CD8-positive, alpha-beta T cell (primary cell): ENCODE measurements at regions of chr17 and their contacts with region 1.

Region 1: DNA sequence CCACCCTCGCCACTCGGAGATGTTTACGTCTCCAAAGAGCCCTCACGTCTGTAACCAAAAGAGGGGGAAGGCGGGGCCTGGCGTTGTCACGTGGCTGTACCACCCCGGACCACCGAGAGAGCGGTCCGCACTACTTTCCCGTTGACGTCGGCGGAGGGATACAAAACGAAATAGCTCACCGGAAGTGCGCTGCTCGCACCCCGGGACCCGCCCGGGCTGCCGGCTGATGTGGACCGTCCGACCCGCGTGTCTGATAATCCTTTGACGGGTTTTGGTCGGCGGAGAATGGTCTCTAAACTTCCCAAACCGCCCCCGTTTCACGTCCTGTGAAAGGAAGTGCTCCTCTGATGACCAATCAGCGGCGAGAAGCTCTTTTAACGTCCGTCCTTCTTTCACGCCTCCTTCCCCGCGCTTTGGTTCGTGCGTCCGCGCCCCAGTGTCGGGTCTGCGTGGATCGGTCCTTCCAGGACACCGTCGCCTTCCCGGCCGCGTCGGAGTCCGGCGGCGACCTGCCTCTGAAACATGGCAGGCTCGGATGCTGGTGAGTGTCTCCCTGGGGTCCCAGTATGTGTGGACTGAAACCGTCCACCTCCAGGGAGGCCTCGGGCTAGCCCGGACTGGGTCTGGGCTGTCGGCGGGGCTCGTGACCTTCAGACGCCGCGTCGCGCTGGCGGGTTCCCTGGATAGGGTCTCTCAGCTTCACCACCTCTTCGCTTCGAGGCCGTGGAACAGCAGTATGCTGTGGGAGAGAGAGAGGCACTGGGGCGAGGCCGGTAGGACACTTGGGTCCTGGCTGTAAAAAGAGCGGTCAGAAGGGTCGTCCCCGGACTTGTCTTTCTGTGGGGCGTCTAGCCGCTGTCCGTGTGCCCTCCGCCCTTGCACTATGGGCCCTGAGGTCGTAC is at the start of gene CEP95:
- DNase-seq: peak; percentile 90 to 99 (median 96)
- ATAC-seq: peak; percentile 64
- H3K4me3 ChIP-seq: peak within 1 kb of the TSS; percentile 99 to 100
- H3K4me3 Mint-ChIP-seq: peak within 1 kb of the TSS; percentile 100
- H3K27ac ChIP-seq: peak within 1 kb of the TSS; percentile 100
- H3K27ac Mint-ChIP-seq: peak within 1 kb of the TSS; percentile 100
- H3K4me1 ChIP-seq: peaks cover 44% of the 10 kb centered on the region
- H3K4me1 Mint-ChIP-seq: peaks cover 62% of the 10 kb centered on the region
- H3K27me3 ChIP-seq: no peaks in the 10 kb centered on the region
- H3K27me3 Mint-ChIP-seq: no peaks in the 10 kb centered on the region
- CTCF ChIP-seq: no peak
- total RNA-seq, gene CEP95: 248 to 282 TPM

Region 2: DNA sequence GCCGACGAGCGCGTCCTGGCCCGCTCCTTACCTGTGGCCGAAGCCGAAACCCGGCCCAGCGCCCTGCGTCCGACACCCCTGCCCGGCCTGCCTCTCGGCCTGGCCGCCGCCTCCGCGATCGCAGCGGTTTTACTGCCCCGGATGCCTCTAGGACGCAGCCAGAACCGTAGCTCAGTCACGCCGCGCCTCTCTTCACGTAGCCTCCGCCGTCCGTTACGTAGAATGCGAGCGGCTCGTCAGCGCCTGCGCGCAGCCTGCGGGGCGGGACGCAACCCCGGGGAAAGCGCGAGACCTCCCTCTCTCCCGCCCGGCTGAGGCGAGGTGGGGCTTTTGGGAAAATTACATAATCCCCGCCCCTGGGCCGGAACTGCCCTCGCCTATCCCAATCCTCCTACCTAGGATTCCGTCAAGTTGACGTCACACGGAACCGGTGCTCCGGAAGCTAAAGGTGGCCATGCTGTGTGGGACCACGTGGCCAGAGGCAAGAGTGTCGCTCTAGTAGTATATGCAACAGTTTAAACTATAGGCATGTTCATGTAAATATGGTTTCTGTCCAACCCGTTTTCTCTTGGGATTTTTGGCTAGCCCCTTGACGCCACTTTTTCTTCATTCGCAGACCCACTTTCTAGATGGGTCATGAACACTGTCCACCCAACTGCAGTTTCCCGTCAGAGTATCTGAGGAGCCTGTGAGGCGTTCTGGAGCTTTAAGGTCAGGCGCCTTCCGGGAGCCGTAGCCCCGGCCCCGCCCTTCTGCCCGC is 733.3 kb before region 1 on chr17 and contains the start of gene CCDC47:
- CTCF ChIA-PET with region 1: no interaction called
- POLR2A ChIA-PET with region 1: interaction called, 7 read pairs
- intact Hi-C with region 1: loop called in 1 of 2 experiments (anchors 5 kb)
- DNase-seq: peak; percentile 95 to 100 (median 97)
- ATAC-seq: peak; percentile 79
- H3K4me3 ChIP-seq: peak within 1 kb of the TSS; percentile 84 to 95
- H3K4me3 Mint-ChIP-seq: peak within 1 kb of the TSS; percentile 97
- H3K27ac ChIP-seq: peak within 1 kb of the TSS; percentile 86 to 97
- H3K27ac Mint-ChIP-seq: peak within 1 kb of the TSS; percentile 98
- H3K4me1 ChIP-seq: peaks cover 41% of the 10 kb centered on the region
- H3K4me1 Mint-ChIP-seq: peaks cover 60% of the 10 kb centered on the region
- H3K27me3 ChIP-seq: no peaks in the 10 kb centered on the region
- H3K27me3 Mint-ChIP-seq: no peaks in the 10 kb centered on the region
- CTCF ChIP-seq: no peak
- total RNA-seq, gene CCDC47: 33.1 to 34.6 TPM

Region 3: DNA sequence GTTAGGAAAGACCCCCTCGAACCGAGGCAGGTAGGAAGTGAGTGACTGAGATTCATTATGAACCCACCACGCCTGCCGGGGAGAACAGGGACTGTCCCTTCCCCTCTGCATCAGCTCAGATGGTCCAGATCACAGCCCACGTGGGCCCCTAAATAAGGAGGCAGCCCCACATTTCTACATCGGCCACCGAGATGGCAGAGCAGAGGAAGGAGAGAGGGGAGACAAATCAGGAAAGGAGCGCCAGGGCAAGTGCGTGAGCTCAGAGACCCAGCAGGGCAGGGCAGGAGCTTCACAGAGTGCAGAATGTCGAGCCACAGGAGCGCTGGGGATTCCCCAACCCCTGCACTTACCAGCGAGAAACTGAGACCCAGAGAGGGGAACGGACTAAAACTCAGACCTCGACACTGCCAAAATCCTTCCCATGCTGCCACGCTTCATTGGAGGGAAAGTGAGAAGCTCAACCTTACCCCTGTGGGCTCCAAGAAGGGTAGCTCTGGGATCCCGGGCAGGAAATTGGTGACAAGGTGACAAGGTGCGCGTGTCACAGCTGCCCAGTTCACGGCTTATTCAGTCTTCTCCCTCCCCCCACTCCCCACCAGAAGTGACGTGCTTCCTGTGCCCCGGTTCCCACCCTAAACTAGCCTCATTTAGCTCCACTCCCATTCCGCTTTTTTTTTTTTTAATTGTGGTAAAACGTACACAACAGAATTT is 486.6 kb before region 1 on chr17 and contains the start of gene ICAM2:
- CTCF ChIA-PET with region 1: no interaction called
- POLR2A ChIA-PET with region 1: interaction called, 9 read pairs
- intact Hi-C with region 1: loop called in 1 of 2 experiments (anchors 5 kb)
- DNase-seq: peak; percentile 83 to 99 (median 90)
- ATAC-seq: peak; percentile 73
- H3K4me3 ChIP-seq: peak within 1 kb of the TSS; percentile 78 to 87
- H3K4me3 Mint-ChIP-seq: peak within 1 kb of the TSS; percentile 99
- H3K27ac ChIP-seq: peak within 1 kb of the TSS; percentile 95 to 99
- H3K27ac Mint-ChIP-seq: peak within 1 kb of the TSS; percentile 100
- H3K4me1 ChIP-seq: peaks cover 72% of the 10 kb centered on the region
- H3K4me1 Mint-ChIP-seq: peaks cover 79% of the 10 kb centered on the region
- H3K27me3 ChIP-seq: no peaks in the 10 kb centered on the region
- H3K27me3 Mint-ChIP-seq: no peaks in the 10 kb centered on the region
- CTCF ChIP-seq: no peak
- total RNA-seq, gene ICAM2: 38.0 to 38.7 TPM

Region 4: DNA sequence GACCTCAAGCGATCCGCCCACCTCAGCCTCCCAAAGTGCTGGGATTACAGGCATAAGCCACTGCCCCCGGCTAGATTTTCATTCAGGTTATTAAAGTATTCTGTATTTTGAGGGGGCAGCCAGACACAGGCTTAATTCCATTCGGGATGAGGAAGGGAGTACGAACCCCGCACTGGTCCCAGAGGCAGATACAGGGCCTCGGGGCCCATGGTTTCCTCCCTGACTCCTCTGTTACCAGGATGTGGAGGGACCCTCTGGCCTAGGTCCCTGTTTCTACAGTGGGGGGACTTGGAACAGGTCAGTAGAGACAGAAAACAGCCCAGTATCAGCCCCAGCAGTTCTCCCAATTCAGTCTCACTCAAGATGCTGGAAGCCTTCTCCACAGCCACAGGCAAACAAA is 158.2 kb before region 1 on chr17:
- CTCF ChIA-PET with region 1: no interaction called
- POLR2A ChIA-PET with region 1: interaction called, 24 read pairs
- intact Hi-C with region 1: no loop called
- DNase-seq: no peak
- ATAC-seq: no peak
- H3K4me3 ChIP-seq: no peak overlapping the region
- H3K4me3 Mint-ChIP-seq: no peak overlapping the region
- H3K27ac ChIP-seq: peak overlapping the region in 1 of 2 experiments; percentile 40
- H3K27ac Mint-ChIP-seq: peak overlapping the region; percentile 98
- H3K4me1 ChIP-seq: peaks cover 34% of the 10 kb centered on the region
- H3K4me1 Mint-ChIP-seq: peaks cover 37% of the 10 kb centered on the region
- H3K27me3 ChIP-seq: no peaks in the 10 kb centered on the region
- H3K27me3 Mint-ChIP-seq: no peaks in the 10 kb centered on the region
- CTCF ChIP-seq: no peak

Region 5: DNA sequence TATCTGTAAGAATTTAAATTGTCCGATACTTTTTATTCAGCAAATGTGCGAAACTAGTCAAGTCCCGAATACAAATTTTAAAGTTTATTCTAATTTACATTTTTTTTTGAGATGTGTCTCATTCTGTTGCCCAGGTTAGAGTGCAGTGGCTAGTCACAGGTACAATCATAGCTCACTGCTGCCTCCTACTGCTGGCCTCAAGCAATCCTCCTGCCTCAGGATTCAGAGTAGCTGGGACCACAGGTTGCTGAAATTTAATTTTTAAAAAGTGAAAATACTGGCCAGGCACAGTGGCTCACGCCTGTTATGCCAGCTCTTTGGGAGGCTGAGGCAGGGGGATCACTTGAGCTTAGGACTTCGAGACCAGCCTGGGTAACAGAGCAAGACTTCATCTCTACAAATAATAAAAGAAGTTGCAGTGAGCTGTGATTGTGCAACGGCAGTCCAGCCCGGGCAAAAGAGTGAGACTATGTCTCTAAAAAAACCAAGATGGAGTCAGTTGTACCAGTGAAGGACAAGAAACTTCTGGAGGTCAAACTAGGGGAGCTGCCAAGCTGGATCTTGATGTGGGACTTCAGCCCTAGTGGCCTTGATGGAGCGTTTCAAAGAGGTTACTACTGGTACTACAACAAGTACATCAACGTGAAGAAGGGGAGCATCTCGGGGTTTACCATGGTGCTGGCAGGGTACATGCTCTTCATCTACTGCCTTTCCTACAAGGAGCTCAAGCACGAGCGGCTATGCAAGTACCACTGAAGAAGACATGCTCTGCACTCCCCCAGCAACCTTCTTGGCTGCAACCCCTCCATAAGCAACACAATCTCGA is 15.6 kb before region 1 on chr17:
- CTCF ChIA-PET with region 1: interaction called, 12 read pairs
- POLR2A ChIA-PET with region 1: interaction called, 135 read pairs
- intact Hi-C with region 1: loop called in 1 of 2 experiments (anchors 2 kb)
- DNase-seq: peak in 8 of 9 experiments; percentile 27 to 71 (median 53)
- ATAC-seq: peak; percentile 76
- H3K4me3 ChIP-seq: no peak overlapping the region
- H3K4me3 Mint-ChIP-seq: no peak overlapping the region
- H3K27ac ChIP-seq: no peak overlapping the region
- H3K27ac Mint-ChIP-seq: no peak overlapping the region
- H3K4me1 ChIP-seq: peaks cover 15% of the 10 kb centered on the region
- H3K4me1 Mint-ChIP-seq: peaks cover 34% of the 10 kb centered on the region
- H3K27me3 ChIP-seq: no peaks in the 10 kb centered on the region
- H3K27me3 Mint-ChIP-seq: no peaks in the 10 kb centered on the region
- CTCF ChIP-seq: peak; percentile 74

Region 6: GRCh38 chr17:66191593-66192382 is 1685.0 kb after region 1 on chr17 and contains the start of gene CEP112:
- CTCF ChIA-PET with region 1: no interaction called
- POLR2A ChIA-PET with region 1: no interaction called
- intact Hi-C with region 1: loop called in 1 of 2 experiments (anchors 5 kb)
- DNase-seq: peak; percentile 84 to 99 (median 92)
- ATAC-seq: peak; percentile 86
- H3K4me3 ChIP-seq: peak within 1 kb of the TSS; percentile 58 to 76
- H3K4me3 Mint-ChIP-seq: peak within 1 kb of the TSS; percentile 84
- H3K27ac ChIP-seq: peak within 1 kb of the TSS; percentile 58 to 76
- H3K27ac Mint-ChIP-seq: peak within 1 kb of the TSS; percentile 83
- H3K4me1 ChIP-seq: peaks cover 14% of the 10 kb centered on the region
- H3K4me1 Mint-ChIP-seq: peaks cover 15% of the 10 kb centered on the region
- H3K27me3 ChIP-seq: no peaks in the 10 kb centered on the region
- H3K27me3 Mint-ChIP-seq: no peaks in the 10 kb centered on the region
- CTCF ChIP-seq: no peak
- total RNA-seq, gene CEP112: 0.28 to 1.5 TPM